ENCODE measurements at regions of chr16 and their contacts with region 1.

Region 1: DNA sequence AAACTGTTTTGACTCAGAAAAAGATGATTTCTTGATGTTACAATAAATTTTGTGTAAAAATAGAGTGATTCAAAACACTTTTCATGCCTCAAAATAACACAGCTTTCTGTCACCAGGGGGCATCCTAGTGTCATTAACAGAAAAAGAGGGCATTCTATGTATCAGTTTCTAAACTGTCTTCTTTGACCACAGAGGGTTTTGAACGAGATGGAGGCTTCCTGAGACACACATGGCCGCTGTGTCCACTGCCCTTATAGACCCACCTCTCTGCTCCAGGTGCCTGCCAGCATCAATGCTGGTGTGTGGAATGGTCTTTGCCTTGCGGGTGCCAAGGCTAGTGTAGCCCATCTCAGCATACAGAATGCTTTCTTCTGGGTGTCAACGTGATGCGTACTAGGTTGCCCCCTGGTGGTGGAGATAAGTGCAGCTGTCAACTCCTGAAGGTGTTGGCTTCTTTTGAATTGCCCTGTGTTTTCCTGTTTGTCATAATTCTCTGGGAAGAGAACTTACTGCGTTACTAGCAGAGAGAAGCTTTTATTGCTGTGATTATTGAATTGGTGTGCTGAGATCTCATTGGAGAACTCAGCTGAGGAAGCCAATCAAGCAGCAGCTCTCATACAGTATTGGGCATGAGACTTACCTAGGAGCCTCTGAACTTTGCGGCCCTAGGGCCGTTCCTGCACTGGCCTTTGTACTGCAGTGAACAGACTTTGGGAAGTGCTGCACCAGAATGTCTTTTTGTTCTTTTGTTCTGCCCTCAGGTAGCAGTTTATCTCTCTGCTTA is 38.6 kb downstream of the USP10 start:
- DNase-seq: peak; percentile 74
- H3K4me3 ChIP-seq: peak overlapping the region in 1 of 2 experiments; percentile 6; a peak in 1 of 4 replicates
- H3K27ac ChIP-seq: no peak overlapping the region
- H3K4me1 ChIP-seq: peaks cover 35 to 37% of the 10 kb centered on the region in 2 experiments
- H3K27me3 ChIP-seq: no peaks in the 10 kb centered on the region
- CTCF ChIP-seq: peak; percentile 94
- EP300 ChIP-seq: no peak
- RAD21 ChIP-seq: peak; percentile 64

Region 2: DNA sequence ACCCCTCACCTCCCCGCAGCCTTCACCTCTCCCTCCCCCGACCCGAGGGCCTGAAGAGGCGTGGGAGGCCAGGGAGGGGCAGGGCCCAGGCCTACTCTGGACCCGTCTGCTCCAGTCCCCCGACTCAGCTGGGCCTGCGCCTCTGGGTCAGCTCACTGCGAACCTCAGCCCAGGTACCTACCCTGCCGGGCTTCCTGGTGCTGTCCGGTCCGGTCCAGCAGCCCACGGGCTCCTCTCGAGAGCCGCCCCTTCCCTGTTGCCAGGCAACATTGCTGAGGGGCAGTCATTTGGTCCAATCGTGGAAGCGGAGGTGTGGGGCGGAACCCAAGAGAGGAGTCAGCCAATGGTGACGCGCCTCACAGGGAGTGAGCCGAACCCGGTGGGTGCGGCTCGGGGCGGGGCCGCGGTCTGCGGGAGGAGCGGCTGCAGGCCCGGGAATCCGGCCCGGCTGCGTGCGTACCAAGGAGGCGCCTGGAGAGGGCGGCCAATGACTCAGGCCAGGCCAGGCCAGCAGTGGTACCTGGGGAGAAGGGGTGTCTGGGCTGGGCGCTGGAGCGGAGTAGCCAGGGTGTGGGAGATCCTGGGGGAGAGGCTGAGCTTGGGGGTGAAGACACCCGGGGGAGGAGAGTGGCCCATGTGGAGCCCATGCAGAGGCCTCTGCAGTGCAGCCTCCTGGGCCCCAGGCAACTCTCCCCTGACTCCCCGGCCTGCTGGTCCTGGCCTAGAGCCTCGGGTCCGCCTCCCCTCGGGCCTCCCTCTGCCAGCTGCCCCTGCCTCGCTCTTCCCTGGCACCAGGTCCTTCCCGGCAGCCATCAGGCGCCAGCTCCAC is 233.8 kb before region 1 on chr16 and contains the start of gene MEAK7:
- CTCF ChIA-PET with region 1: interaction called, 10 read pairs
- POLR2A ChIA-PET with region 1: no interaction called
- DNase-seq: peak; percentile 98
- H3K4me3 ChIP-seq: peak within 1 kb of the TSS; percentile 73 to 93
- H3K27ac ChIP-seq: peak within 1 kb of the TSS; percentile 67 to 82
- H3K4me1 ChIP-seq: peaks cover 14 to 18% of the 10 kb centered on the region in 2 experiments; a peak in 3 of 4 replicates
- H3K27me3 ChIP-seq: no peaks in the 10 kb centered on the region
- CTCF ChIP-seq: peak; percentile 19; the same call in 1 of the 2 replicates
- EP300 ChIP-seq: no peak
- RAD21 ChIP-seq: no peak
- polyA plus RNA-seq, gene MEAK7: 11.9 and 19.0 TPM in 2 replicates

Region 3: GRCh38 chr16:84663433-84664101 is 74.9 kb before region 1 on chr16:
- CTCF ChIA-PET with region 1: interaction called, 20 read pairs
- POLR2A ChIA-PET with region 1: no interaction called
- DNase-seq: no peak
- H3K4me3 ChIP-seq: no peak overlapping the region
- H3K27ac ChIP-seq: no peak overlapping the region
- H3K4me1 ChIP-seq: peaks cover 0 to 16% of the 10 kb centered on the region in 2 experiments; a peak in 3 of 4 replicates
- H3K27me3 ChIP-seq: no peaks in the 10 kb centered on the region
- CTCF ChIP-seq: no peak
- EP300 ChIP-seq: no peak
- RAD21 ChIP-seq: no peak

Region 4: DNA sequence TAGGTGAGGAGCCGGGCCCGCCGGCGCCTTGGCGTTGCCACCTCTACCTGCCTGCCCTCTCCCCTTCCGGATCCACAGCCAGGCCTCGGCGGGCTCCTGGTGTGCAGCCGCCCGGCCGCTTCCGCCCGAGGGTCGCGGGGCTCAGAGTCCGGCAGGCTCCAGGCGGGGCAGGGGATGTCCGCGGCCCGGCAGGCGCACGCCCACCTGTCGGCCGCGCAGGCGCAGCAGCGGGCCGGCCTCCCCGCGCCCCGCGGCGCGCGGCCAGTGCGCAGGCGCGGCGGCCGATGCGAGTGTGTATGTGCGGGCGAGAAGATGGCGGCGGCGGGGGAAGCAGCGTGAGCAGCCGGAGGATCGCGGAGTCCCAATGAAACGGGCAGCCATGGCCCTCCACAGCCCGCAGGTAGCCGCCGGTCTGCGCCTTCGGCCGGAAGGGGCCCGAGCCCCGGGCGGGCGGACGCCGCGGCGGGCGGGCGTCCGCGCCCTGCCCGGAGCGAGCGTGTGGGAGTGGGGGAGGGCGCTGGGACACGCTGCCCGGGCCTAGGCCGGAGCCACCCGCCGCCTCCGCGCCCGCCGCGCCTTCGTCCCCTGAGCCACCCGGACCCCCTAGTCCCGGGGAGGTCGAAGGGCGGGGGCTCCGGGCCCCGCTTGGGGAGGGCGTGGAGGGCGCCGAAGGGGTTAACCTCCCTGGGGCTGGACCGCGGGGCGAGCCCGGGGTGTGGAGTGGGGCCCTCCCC is 38.6 kb before region 1 on chr16 and contains the start of gene USP10:
- CTCF ChIA-PET with region 1: interaction called, 21 read pairs
- POLR2A ChIA-PET with region 1: no interaction called
- DNase-seq: peak; percentile 100
- H3K4me3 ChIP-seq: peak within 1 kb of the TSS; percentile 65 to 91
- H3K27ac ChIP-seq: peak within 1 kb of the TSS; percentile 58 to 71
- H3K4me1 ChIP-seq: peaks cover 7 to 15% of the 10 kb centered on the region in 2 experiments; a peak in 2 of 4 replicates
- H3K27me3 ChIP-seq: no peaks in the 10 kb centered on the region
- CTCF ChIP-seq: no peak
- EP300 ChIP-seq: no peak
- RAD21 ChIP-seq: no peak
- polyA plus RNA-seq, gene USP10: 41.6 and 49.2 TPM in 2 replicates

Region 5: GRCh38 chr16:84720177-84720579 is 18.3 kb before region 1 on chr16:
- CTCF ChIA-PET with region 1: interaction called, 134 read pairs
- POLR2A ChIA-PET with region 1: no interaction called
- DNase-seq: peak; percentile 71
- H3K4me3 ChIP-seq: peak overlapping the region; percentile 12 to 27; a peak in 2 of 4 replicates
- H3K27ac ChIP-seq: peak overlapping the region; percentile 68 to 84
- H3K4me1 ChIP-seq: peaks cover 22 to 30% of the 10 kb centered on the region in 2 experiments; a peak in 3 of 4 replicates
- H3K27me3 ChIP-seq: no peaks in the 10 kb centered on the region
- CTCF ChIP-seq: peak; percentile 10; the same call in 1 of the 2 replicates
- EP300 ChIP-seq: peak in 1 of 2 experiments; percentile 81; a peak in 2 of 4 replicates
- RAD21 ChIP-seq: no peak

Region 6: GRCh38 chr16:84754353-84754856 is 16.0 kb after region 1 on chr16:
- CTCF ChIA-PET with region 1: interaction called, 73 read pairs
- POLR2A ChIA-PET with region 1: no interaction called
- DNase-seq: peak; percentile 62
- H3K4me3 ChIP-seq: peak overlapping the region in 1 of 2 experiments; percentile 4; a peak in 1 of 4 replicates
- H3K27ac ChIP-seq: no peak overlapping the region
- H3K4me1 ChIP-seq: no peaks in the 10 kb centered on the region; a peak in 1 of 4 replicates
- H3K27me3 ChIP-seq: no peaks in the 10 kb centered on the region
- CTCF ChIP-seq: peak; percentile 85
- EP300 ChIP-seq: no peak
- RAD21 ChIP-seq: peak; percentile 93

Region 7: GRCh38 chr16:84952335-84953189 is 214.1 kb after region 1 on chr16:
- CTCF ChIA-PET with region 1: interaction called, 20 read pairs
- POLR2A ChIA-PET with region 1: no interaction called
- DNase-seq: peak; percentile 85
- H3K4me3 ChIP-seq: peak overlapping the region in 1 of 2 experiments; percentile 32; a peak in 1 of 4 replicates
- H3K27ac ChIP-seq: peak overlapping the region; percentile 22 to 84; a peak in 3 of 4 replicates
- H3K4me1 ChIP-seq: peaks cover 4 to 14% of the 10 kb centered on the region in 2 experiments; a peak in 2 of 4 replicates
- H3K27me3 ChIP-seq: no peaks in the 10 kb centered on the region
- CTCF ChIP-seq: peak; percentile 88
- EP300 ChIP-seq: peak in 1 of 2 experiments; percentile 71; a peak in 2 of 4 replicates
- RAD21 ChIP-seq: peak; percentile 82

Region 8: GRCh38 chr16:85412911-85413520 is 674.6 kb after region 1 on chr16:
- CTCF ChIA-PET with region 1: no interaction called
- POLR2A ChIA-PET with region 1: no interaction called
- DNase-seq: no peak
- H3K4me3 ChIP-seq: no peak overlapping the region
- H3K27ac ChIP-seq: no peak overlapping the region
- H3K4me1 ChIP-seq: peaks cover 0 to 26% of the 10 kb centered on the region in 2 experiments; a peak in 2 of 4 replicates
- H3K27me3 ChIP-seq: no peaks in the 10 kb centered on the region
- CTCF ChIP-seq: no peak
- EP300 ChIP-seq: no peak
- RAD21 ChIP-seq: no peak

Measured in SK-N-SH (cell line).